ENCODE measurements at regions of chr2 and their contacts with region 1.

Region 1: GRCh38 chr2:27409321-27410073 is at the start of gene PPM1G:
- DNase-seq: peak; percentile 99
- total RNA-seq, gene PPM1G: 32.0 TPM

Region 2: GRCh38 chr2:27380626-27381545 is 28.6 kb before region 1 on chr2 and contains the start of gene ZNF513:
- intact Hi-C with region 1: loop called (anchors 2 kb)
- DNase-seq: peak; percentile 99
- total RNA-seq, gene ZNF513: 10.6 TPM

Region 3: GRCh38 chr2:27428213-27428977 is 18.9 kb after region 1 on chr2 and contains the start of gene NRBP1:
- intact Hi-C with region 1: loop called (anchors 1 kb)
- DNase-seq: peak; percentile 96
- total RNA-seq, gene NRBP1: 64.6 TPM

Region 4: GRCh38 chr2:27663463-27664249 is 254.2 kb after region 1 on chr2 and contains the starts of genes SLC4A1AP and SUPT7L:
- intact Hi-C with region 1: loop called (anchors 10 kb)
- DNase-seq: peak; percentile 88
- total RNA-seq, gene SLC4A1AP: 23.4 TPM
- total RNA-seq, gene SUPT7L: 25.4 TPM

Measured in cardiac septum (tissue), 1 donor.